GM12878 (cell line): ENCODE measurements at regions of chr16 and their contacts with region 1.

Region 1: DNA sequence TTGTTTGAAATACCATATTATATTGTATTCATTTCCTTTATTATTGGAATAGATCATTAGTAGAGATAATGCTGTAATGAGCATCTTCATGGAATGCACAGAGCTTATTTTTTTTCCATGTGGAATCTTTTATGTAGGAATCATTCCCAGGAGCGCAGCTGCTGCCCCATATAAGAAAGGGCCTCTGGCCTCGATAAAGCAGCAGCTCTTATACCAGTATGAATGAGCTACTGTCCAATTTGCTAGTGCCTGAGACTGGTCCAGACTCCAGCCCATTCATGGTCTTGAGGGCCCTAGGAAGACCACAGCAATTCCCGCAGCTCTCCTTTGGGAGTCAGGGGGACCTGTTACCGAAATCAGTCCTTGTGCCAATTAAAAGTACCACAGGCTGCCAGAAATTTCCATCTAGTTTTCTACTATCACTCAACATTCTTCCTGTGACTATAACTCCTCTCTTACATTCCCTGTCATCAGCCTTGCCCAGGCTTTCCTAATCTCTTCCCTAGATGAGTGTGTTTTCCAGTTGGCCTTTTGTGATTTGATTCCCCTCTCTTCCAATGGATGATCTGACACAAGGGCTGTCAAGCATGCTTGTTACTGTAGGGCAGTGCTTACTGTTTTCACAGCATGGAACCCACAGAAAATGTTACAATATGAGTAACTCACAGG is 1.9 kb downstream of the ZNF843 start:
- DNase-seq: no peak
- ATAC-seq: no peak
- H3K4me3 ChIP-seq: no peak overlapping the region
- H3K27ac ChIP-seq: no peak overlapping the region
- H3K4me1 ChIP-seq: no peaks in the 10 kb centered on the region
- H3K27me3 ChIP-seq: no peaks in the 10 kb centered on the region
- CTCF ChIP-seq: no peak
- EP300 ChIP-seq: no peak
- POLR2A ChIP-seq: no peak
- RAD21 ChIP-seq: no peak

Region 2: DNA sequence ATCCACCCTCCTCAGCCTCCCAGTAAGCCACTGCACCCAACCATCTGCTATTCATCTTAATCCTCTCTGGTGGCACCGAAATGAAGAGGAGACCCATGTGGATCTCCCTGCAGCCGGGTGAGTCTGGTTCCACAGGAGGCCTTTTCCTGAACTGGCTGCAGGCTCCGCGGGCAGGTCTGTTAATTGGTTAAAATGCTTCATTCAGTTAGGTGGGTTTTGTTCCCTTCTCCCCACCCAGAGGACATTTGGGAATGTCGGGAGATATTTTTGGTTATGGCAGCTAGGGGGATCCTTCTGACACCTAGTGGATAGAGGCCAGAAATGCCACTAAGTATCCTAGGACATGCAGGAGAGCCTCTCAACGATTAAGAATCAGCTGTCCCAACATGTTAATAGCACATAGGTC is 1711.5 kb before region 1 on chr16:
- CTCF ChIA-PET with region 1: no interaction called
- POLR2A ChIA-PET with region 1: no interaction called
- RAD21 ChIA-PET with region 1: no interaction called
- SMC1A ChIA-PET with region 1: no interaction called
- in situ Hi-C with region 1: no loop called
- intact Hi-C with region 1: no loop called
- DNase-seq: no peak
- ATAC-seq: no peak
- H3K4me3 ChIP-seq: no peak overlapping the region
- H3K27ac ChIP-seq: no peak overlapping the region
- H3K4me1 ChIP-seq: peaks cover 17% of the 10 kb centered on the region
- H3K27me3 ChIP-seq: no peaks in the 10 kb centered on the region
- CTCF ChIP-seq: peak; percentile 44 to 56 (median 54); a peak in 5 of 6 replicates
- EP300 ChIP-seq: no peak
- POLR2A ChIP-seq: no peak
- RAD21 ChIP-seq: peak; percentile 36

Region 3: GRCh38 chr16:31094424-31095120 is 346.1 kb before region 1 on chr16 and contains the start of gene VKORC1:
- CTCF ChIA-PET with region 1: interaction called, 3 read pairs
- POLR2A ChIA-PET with region 1: no interaction called
- RAD21 ChIA-PET with region 1: interaction called, 5 read pairs
- SMC1A ChIA-PET with region 1: no interaction called
- in situ Hi-C with region 1: no loop called
- intact Hi-C with region 1: loop called (anchors 5 kb)
- DNase-seq: peak; percentile 87
- ATAC-seq: peak; percentile 89
- H3K4me3 ChIP-seq: peak within 1 kb of the TSS; percentile 99
- H3K27ac ChIP-seq: peak within 1 kb of the TSS; percentile 81
- H3K4me1 ChIP-seq: peaks cover 8% of the 10 kb centered on the region
- H3K27me3 ChIP-seq: no peaks in the 10 kb centered on the region
- CTCF ChIP-seq: no peak
- EP300 ChIP-seq: no peak
- POLR2A ChIP-seq: peak; percentile 79
- RAD21 ChIP-seq: no peak
- polyA plus RNA-seq, gene VKORC1: 19.8 to 39.0 TPM

Region 4: DNA sequence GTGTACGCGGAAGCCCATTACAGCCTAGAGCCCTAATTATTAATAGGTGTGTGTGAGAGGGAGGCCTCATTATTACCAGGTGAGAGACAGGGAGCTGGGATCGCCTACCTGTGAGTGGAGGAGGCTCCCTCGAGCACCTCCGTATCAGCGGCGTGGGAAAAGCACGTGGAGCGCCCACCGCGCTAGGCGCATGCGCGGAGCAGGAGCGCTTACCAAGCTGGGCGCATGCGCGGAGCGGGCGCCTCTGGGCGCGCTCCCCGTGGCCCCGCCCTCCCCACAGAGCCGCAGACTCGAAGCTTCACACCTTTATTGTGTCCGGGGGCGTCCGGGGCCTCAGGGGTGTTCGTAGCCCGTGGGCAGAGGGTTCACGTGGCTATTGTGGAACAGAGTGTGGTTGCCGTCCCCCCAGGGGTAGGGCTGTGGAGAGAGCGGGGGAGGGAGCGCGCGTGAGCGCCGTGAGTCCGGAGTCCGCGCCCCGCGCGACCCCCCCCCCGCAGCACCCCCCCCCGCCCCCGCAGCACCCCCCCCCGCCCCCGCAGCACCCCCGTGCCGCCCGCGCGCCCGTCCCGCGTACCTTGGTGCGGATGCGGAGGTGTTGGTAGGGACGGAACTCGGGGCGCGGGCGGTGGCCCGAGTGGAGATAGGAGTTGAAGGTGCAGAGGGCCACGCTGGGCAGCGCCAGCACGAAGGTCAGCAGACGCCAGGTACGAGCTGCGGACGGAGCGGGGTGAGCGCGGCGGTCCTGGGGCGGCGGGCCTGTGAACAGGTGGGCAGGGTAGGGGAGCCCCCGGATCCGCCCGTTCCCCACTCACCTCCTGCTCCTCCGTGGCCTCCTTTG is 13.0 kb before region 1 on chr16:
- CTCF ChIA-PET with region 1: interaction called, 18 read pairs
- POLR2A ChIA-PET with region 1: no interaction called
- RAD21 ChIA-PET with region 1: interaction called, 20 read pairs
- SMC1A ChIA-PET with region 1: interaction called, 31 read pairs
- in situ Hi-C with region 1: no loop called
- intact Hi-C with region 1: no loop called
- DNase-seq: no peak
- ATAC-seq: no peak
- H3K4me3 ChIP-seq: no peak overlapping the region
- H3K27ac ChIP-seq: no peak overlapping the region
- H3K4me1 ChIP-seq: peaks cover under 1% of the 10 kb centered on the region
- H3K27me3 ChIP-seq: no peaks in the 10 kb centered on the region
- CTCF ChIP-seq: no peak
- EP300 ChIP-seq: no peak
- POLR2A ChIP-seq: no peak
- RAD21 ChIP-seq: no peak

Region 5: GRCh38 chr16:31451681-31452351 is 11.2 kb after region 1 on chr16:
- CTCF ChIA-PET with region 1: interaction called, 71 read pairs
- POLR2A ChIA-PET with region 1: no interaction called
- RAD21 ChIA-PET with region 1: interaction called, 6 read pairs
- SMC1A ChIA-PET with region 1: interaction called, 4 read pairs
- in situ Hi-C with region 1: no loop called
- intact Hi-C with region 1: no loop called
- DNase-seq: no peak
- ATAC-seq: peak; percentile 84
- H3K4me3 ChIP-seq: no peak overlapping the region
- H3K27ac ChIP-seq: no peak overlapping the region
- H3K4me1 ChIP-seq: peaks cover 8% of the 10 kb centered on the region
- H3K27me3 ChIP-seq: no peaks in the 10 kb centered on the region
- CTCF ChIP-seq: peak; percentile 21 to 55 (median 48)
- EP300 ChIP-seq: no peak
- POLR2A ChIP-seq: no peak
- RAD21 ChIP-seq: peak; percentile 20; the same call in 1 of the 2 replicates

Region 6: GRCh38 chr16:31487720-31488467 is 47.2 kb after region 1 on chr16:
- CTCF ChIA-PET with region 1: no interaction called
- POLR2A ChIA-PET with region 1: no interaction called
- RAD21 ChIA-PET with region 1: no interaction called
- SMC1A ChIA-PET with region 1: no interaction called
- in situ Hi-C with region 1: no loop called
- intact Hi-C with region 1: no loop called
- DNase-seq: no peak
- ATAC-seq: peak; percentile 78
- H3K4me3 ChIP-seq: peak overlapping the region; percentile 52; the same call in 1 of the 2 replicates
- H3K27ac ChIP-seq: no peak overlapping the region
- H3K4me1 ChIP-seq: 0 out of 2 replicates have a peak, but pooled peaks cover 3% of the 10 kb centered on the region
- H3K27me3 ChIP-seq: no peaks in the 10 kb centered on the region; a peak in 1 of 4 replicates
- CTCF ChIP-seq: no peak
- EP300 ChIP-seq: no peak
- POLR2A ChIP-seq: peak; percentile 67
- RAD21 ChIP-seq: no peak